ENCODE measurements at regions of chrX and their contacts with region 1.

Region 1: DNA sequence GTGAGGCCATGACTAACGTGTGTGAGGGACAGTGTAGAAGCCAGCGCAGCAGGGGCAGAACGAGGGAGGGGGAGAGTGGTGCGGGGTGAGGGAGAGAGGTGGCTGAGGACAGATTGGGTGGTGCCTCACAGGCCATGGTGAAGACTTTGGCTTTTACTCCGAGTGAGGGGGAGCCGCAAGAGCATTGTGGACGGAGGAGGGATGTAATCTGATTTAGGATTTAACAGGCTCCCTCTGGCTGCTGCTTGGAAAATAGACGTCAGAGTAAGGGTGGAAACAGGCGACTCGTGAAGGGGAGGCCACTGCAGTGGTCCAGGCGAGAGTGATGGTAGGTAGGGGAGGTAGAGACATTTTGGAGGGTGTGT is 13.0 kb downstream of the PPP1R3F start:
- DNase-seq: peak; percentile 46 to 70 (median 56)
- ATAC-seq: peak; percentile 93
- H3K4me3 ChIP-seq: no peak overlapping the region
- H3K27ac ChIP-seq: no peak overlapping the region; the same call in 2 of the 3 replicates
- H3K4me1 ChIP-seq: peaks cover 5 to 13% of the 10 kb centered on the region in 2 experiments; a peak in 3 of 5 replicates
- H3K27me3 ChIP-seq: no peaks in the 10 kb centered on the region
- CTCF ChIP-seq: peak; percentile 41 to 63 (median 58); a peak in 5 of 6 replicates
- EP300 ChIP-seq: no peak
- POLR2A ChIP-seq: no peak
- RAD21 ChIP-seq: peak; percentile 33 to 62

Region 2: DNA sequence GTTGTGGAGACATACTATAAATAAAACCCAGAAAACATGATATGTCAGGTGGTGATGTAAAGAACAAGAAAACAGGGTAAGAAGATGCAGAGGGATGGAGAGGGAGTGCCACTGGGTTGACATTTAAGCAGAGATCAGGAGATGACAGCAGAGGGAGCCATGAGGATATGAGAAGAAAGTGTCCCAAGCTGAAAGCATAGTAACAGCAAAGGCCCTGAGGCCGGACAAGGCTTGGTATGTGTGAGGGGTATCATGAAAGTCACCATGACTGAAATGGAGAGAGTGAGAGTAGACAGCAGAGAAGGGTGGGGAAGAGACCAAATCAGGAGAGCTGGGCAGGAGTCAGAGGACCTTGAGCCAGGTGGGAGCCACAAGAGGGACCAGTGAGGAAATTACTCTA is 162.5 kb before region 1 on chrX:
- CTCF ChIA-PET with region 1: no interaction called
- POLR2A ChIA-PET with region 1: no interaction called
- in situ Hi-C with region 1: no loop called
- intact Hi-C with region 1: loop called (anchors 5 kb)
- DNase-seq: peak in 1 of 4 experiments; percentile 27
- ATAC-seq: no peak
- H3K4me3 ChIP-seq: no peak overlapping the region
- H3K27ac ChIP-seq: no peak overlapping the region
- H3K4me1 ChIP-seq: peaks cover 0 to 17% of the 10 kb centered on the region in 2 experiments; a peak in 4 of 5 replicates
- H3K27me3 ChIP-seq: no peaks in the 10 kb centered on the region
- CTCF ChIP-seq: peak; percentile 8 to 37 (median 17); a peak in 2 of 6 replicates
- EP300 ChIP-seq: no peak
- POLR2A ChIP-seq: no peak
- RAD21 ChIP-seq: peak; percentile 30 to 48

Region 3: DNA sequence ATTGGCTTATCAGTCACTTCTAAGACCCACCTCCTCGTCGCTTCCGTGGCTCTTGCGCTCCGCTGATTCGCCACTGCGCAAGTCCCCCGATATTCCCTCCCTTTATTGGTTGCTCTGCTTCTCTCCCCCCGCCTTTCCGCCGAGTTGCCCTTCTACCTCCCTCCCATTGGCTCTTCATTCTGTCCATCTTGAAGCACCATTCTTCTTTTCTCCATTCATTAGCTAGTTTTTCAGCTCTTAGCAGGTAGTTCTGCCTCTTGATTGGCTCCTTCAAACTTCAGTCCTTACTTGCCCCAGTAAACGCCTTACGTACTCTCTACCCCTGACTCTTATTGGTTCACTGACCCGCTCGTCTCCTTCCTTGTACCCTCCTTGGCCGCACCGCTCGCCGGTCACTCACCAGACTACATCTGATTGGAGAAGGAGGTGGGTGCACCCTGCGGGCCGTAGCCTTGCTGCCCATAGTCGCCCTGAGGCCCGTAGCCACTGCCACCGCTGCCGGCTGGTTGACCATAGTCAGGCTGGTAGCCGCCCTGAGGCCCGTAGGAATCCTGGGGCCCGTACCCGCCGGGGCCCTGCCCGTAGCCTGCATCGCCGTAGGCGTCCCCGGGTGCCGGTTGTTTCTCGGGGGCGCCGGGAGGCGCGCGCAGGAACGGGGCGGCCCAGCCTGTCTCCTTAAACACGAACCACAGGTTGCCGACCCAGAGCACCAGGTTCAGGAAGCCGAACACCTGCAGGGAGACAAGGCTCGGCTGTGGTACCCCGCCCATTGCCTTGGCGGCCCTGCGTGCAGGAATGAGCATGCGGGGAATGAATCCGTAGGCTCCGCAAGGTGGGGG is 91.4 kb before region 1 on chrX:
- CTCF ChIA-PET with region 1: no interaction called
- POLR2A ChIA-PET with region 1: no interaction called
- in situ Hi-C with region 1: no loop called
- intact Hi-C with region 1: loop called (anchors 2 kb)
- DNase-seq: peak; percentile 84 to 98 (median 90)
- ATAC-seq: peak; percentile 90
- H3K4me3 ChIP-seq: peak overlapping the region; percentile 89
- H3K27ac ChIP-seq: peak overlapping the region; percentile 78
- H3K4me1 ChIP-seq: peaks cover 38 to 48% of the 10 kb centered on the region in 2 experiments
- H3K27me3 ChIP-seq: no peaks in the 10 kb centered on the region
- CTCF ChIP-seq: no peak; a peak in 1 of 6 replicates
- EP300 ChIP-seq: no peak
- POLR2A ChIP-seq: peak; percentile 80
- RAD21 ChIP-seq: no peak